MCF 10A (cell line): ENCODE measurements at regions of chr6 and their contacts with region 1.

Region 1: GRCh38 chr6:33579828-33580714 is at the start of gene BAK1:
- DNase-seq: peak; percentile 90
- H3K4me3 Mint-ChIP-seq: peak within 1 kb of the TSS; percentile 85
- H3K27ac Mint-ChIP-seq: peak within 1 kb of the TSS; percentile 97
- H3K4me1 Mint-ChIP-seq: peaks cover 28% of the 10 kb centered on the region
- H3K27me3 Mint-ChIP-seq: no peaks in the 10 kb centered on the region
- CTCF ChIP-seq: peak; percentile 42
- total RNA-seq, gene BAK1: 45.8 and 57.7 TPM in 2 replicates

Region 2: DNA sequence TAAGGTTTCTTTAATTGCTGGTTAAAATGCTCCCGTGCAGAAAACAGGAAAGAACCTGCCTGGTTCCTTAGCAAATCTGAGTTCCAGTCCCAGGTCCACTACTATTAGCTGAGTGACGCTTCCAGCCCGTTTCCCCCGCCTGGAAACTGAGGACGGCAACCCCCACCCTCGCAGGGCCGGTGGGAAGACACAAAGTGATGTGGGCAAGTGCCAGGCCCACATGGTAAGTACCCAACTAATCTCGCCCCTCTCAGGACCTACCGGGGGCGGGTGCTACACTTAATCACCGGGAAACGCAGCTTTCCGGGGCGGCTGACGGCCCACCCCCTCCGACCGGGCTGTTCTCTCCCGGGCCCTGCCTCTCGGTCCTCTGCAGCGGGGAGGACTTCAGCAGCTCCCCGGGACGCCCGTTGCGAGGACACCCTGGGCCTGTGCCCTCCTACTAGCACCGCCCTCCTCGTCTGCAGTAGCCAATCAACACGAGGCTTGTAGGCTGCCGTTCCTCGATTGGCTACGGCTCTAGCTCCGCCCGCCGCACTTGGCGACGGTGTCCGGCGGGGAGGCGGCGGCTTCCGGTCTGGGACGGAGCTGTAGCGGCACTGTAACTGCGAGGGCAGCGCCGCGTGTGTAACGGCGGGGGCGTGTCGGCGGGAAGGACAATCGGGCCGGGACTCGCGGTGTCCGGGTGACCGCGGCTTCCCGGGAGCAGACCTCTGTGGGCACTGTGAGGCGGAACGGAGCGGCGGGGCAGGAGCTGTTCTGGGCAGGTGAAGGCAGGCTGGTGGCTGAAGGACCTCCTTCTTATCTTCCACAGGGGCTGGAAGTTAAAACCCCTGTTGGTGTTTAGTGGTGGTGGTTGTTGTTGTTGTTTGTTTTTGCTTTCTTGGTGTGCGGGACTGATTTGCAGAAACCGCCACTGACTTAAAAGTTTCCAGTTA is 125.8 kb before region 1 on chr6 and contains the start of gene ZBTB9:
- CTCF ChIA-PET with region 1: interaction called, 6 read pairs
- POLR2A ChIA-PET with region 1: interaction called, 19 read pairs
- intact Hi-C with region 1: loop called (anchors 1 kb)
- DNase-seq: peak; percentile 95
- H3K4me3 Mint-ChIP-seq: peak within 1 kb of the TSS; percentile 89
- H3K27ac Mint-ChIP-seq: peak within 1 kb of the TSS; percentile 72
- H3K4me1 Mint-ChIP-seq: peaks cover 22% of the 10 kb centered on the region
- H3K27me3 Mint-ChIP-seq: no peaks in the 10 kb centered on the region
- CTCF ChIP-seq: no peak
- total RNA-seq, gene ZBTB9: 7.5 and 8.3 TPM in 2 replicates

Region 3: DNA sequence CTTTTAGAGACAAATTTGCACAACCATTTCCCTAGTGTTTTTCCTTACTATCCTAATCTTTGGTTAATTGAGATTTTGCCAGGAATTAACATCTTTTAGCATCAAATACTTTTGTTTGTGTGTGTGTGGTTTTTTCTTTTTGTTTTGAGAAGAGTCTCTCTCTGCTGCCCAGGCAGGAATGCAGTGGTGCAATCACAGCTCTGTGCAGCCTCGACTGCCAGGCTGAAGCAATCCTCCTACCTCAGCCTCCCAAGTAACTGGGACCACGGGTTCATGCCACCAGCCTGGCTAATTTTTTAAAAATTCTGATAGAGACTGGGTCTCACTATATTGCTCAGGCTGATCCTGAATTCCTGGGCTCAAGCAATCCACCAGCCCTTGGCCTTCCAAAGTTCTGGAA is 28.5 kb before region 1 on chr6:
- CTCF ChIA-PET with region 1: interaction called, 4 read pairs
- POLR2A ChIA-PET with region 1: interaction called, 13 read pairs
- intact Hi-C with region 1: no loop called
- DNase-seq: no peak
- H3K4me3 Mint-ChIP-seq: no peak overlapping the region
- H3K27ac Mint-ChIP-seq: no peak overlapping the region
- H3K4me1 Mint-ChIP-seq: peaks cover 6% of the 10 kb centered on the region
- H3K27me3 Mint-ChIP-seq: no peaks in the 10 kb centered on the region
- CTCF ChIP-seq: no peak

Region 4: DNA sequence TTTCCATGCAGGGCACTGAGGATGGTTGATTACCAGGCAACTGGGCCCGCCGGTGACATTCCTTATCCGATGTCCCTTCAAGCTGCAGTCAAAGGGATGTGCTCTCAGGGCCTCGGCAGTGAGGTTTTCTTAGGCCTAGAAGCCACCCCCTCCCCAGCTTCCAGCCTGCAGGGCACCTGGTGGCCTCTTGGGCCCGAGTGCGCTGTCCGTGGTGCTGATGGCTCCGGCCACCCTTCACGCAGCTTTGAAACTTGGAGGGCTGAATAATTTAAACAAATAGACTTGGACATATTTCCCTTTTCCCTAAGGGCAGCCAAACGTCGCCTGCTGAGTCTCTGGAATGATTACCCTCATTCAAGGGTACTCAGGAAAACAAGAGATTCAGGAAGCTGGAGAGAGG is 232.6 kb after region 1 on chr6:
- CTCF ChIA-PET with region 1: no interaction called
- POLR2A ChIA-PET with region 1: no interaction called
- intact Hi-C with region 1: no loop called
- DNase-seq: peak; percentile 51
- H3K4me3 Mint-ChIP-seq: no peak overlapping the region
- H3K27ac Mint-ChIP-seq: no peak overlapping the region
- H3K4me1 Mint-ChIP-seq: no peaks in the 10 kb centered on the region
- H3K27me3 Mint-ChIP-seq: peaks cover 91% of the 10 kb centered on the region
- CTCF ChIP-seq: peak; percentile 9